ENCODE measurements at regions of chr3 and their contacts with region 1.

Region 1: DNA sequence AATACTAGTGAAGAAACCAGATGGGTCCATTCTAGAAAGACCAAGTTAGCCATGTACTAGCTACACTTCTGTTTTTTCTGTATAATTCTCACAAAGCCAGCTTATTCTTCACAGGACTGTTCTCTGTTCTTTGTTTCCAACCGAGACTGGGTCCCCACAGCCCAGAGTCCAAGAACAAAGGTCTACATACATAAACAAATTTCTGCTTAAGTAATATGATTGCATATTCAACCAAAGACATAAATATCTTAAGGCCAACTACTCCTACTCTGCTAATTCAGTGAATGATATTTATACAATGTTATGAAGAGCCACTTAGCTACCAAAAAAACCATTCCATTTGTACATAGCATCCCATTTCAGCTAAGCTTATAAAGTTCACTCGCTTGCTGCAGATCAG is 299.8 kb upstream of the CCDC54 start:
- DNase-seq: peak in 1 of 10 donors; percentile 35
- H3K4me3 ChIP-seq: peak overlapping the region in 1 of 59 donors; percentile 1
- H3K27ac ChIP-seq: peak overlapping the region; percentile 8 to 96 (median 88)
- H3K27me3 ChIP-seq: no peaks in the 10 kb centered on the region
- CTCF ChIP-seq: no peak

Region 2: DNA sequence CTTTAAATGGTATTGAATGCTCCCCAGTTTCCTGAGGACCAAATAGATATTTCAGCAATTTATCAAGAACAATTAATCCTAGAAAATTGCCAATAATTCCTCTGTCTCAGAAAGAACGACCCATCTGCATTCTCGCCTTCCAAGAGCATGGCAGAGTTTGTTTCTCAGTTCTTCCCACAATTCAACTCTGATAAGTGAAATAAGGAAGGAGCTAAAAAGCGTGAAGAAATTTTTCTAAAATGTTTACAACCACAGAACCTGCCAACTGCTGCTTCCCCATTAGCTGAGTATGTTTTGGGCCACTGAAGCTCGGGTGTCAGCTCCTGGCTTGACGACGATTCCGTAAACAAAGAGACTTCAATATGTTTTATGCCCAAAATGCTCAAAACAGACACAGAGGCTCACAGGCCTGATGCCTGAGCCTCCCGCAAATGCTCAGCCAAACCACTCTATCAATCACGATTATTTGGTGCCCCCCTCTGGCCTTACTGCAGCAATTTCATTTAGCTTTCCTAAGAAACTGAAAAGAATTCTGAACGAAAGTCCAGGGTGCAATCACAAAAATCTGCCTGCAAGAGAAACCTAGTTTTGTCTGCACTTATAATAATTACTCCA is 40.6 kb after region 1 on chr3:
- intact Hi-C with region 1: loop called in 1 of 2 experiments (anchors 5 kb)
- DNase-seq: peak; percentile 17 to 78 (median 63)
- H3K4me3 ChIP-seq: peak overlapping the region in 9 of 59 donors; percentile 2 to 35 (median 6)
- H3K27ac ChIP-seq: peak overlapping the region in 58 of 59 donors; percentile 13 to 89 (median 74)
- H3K27me3 ChIP-seq: no peaks in the 10 kb centered on the region
- CTCF ChIP-seq: peak; percentile 39 to 85 (median 70)

Measured in dorsolateral prefrontal cortex (tissue), 120 donors.